GM10248 (cell line): ENCODE measurements at regions of chr10 and their contacts with region 1.

Region 1: GRCh38 chr10:83978823-83979255 is 160.5 kb upstream of the GHITM start:
- DNase-seq: no peak
- CTCF ChIP-seq: no peak

Region 2: DNA sequence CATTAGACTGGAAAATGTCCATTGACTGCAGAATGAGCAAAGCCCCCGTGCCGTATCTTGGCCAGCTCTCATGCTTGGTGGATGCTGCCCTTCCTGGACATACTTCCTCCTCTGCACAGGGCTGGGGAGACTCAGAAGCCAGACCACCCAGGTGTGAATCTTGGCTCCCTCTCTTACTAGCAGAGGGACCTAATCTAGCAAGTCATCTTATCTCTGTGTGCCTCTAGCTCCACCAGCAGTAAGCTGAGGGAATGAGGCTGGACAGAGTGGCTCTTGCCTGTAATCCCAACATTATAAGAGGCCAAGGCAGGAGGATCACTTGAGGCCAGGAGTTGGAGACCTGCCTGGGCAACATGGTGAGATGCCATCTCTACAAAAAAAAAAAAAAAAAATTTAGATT is 13.4 kb before region 1 on chr10:
- CTCF ChIA-PET with region 1: interaction called, 11 read pairs
- POLR2A ChIA-PET with region 1: no interaction called
- DNase-seq: no peak
- CTCF ChIP-seq: no peak

Region 3: GRCh38 chr10:84054743-84055142 is 75.9 kb after region 1 on chr10:
- CTCF ChIA-PET with region 1: no interaction called
- POLR2A ChIA-PET with region 1: no interaction called
- DNase-seq: no peak
- CTCF ChIP-seq: no peak